ENCODE measurements at regions of chr19 and their contacts with region 1.

Region 1: GRCh38 chr19:16504271-16504670 is 8.1 kb downstream of the C19orf44 start:
- DNase-seq: no peak
- H3K4me3 ChIP-seq: no peak overlapping the region
- H3K27ac ChIP-seq: no peak overlapping the region
- H3K4me1 ChIP-seq: peaks cover 0 to 8% (median 5%) of the 10 kb centered on the region in 4 donors
- H3K27me3 ChIP-seq: no peaks in the 10 kb centered on the region
- CTCF ChIP-seq: no peak
- EP300 ChIP-seq: no peak
- POLR2A ChIP-seq: no peak

Region 2: GRCh38 chr19:16446724-16447368 is 57.4 kb before region 1 on chr19:
- intact Hi-C with region 1: loop called (anchors 5 kb)
- DNase-seq: no peak
- H3K4me3 ChIP-seq: no peak overlapping the region
- H3K27ac ChIP-seq: peak overlapping the region; percentile 16 to 51 (median 39)
- H3K4me1 ChIP-seq: peaks cover 44 to 64% (median 58%) of the 10 kb centered on the region in 4 donors
- H3K27me3 ChIP-seq: no peaks in the 10 kb centered on the region
- CTCF ChIP-seq: no peak
- EP300 ChIP-seq: no peak
- POLR2A ChIP-seq: no peak

Region 3: DNA sequence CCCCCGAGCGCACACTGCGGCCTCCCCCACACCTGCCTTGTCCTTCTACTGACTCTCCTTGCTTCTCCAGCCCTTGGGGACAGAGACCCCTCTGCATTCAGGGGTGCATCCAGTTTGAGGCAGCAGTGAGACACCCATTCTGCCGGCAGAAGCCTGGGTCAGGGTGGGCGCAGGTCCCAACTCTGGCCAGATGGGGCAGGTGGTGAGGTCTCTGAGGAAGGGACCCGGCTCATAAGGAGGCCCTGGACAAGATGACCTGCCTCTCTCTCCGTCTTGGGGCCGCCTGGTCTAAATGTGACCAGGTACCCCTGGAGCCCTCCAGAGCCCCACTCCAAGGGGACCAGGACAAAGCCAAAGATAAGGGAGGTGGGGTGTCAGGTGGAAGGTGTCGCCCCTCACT is 31.9 kb after region 1 on chr19:
- intact Hi-C with region 1: no loop called
- DNase-seq: no peak
- H3K4me3 ChIP-seq: no peak overlapping the region
- H3K27ac ChIP-seq: no peak overlapping the region
- H3K4me1 ChIP-seq: peaks cover 24 to 40% (median 34%) of the 10 kb centered on the region in 4 donors
- H3K27me3 ChIP-seq: no peaks in the 10 kb centered on the region
- CTCF ChIP-seq: no peak
- EP300 ChIP-seq: no peak
- POLR2A ChIP-seq: no peak